ENCODE measurements at regions of chrX and their contacts with region 1.

Region 1: DNA sequence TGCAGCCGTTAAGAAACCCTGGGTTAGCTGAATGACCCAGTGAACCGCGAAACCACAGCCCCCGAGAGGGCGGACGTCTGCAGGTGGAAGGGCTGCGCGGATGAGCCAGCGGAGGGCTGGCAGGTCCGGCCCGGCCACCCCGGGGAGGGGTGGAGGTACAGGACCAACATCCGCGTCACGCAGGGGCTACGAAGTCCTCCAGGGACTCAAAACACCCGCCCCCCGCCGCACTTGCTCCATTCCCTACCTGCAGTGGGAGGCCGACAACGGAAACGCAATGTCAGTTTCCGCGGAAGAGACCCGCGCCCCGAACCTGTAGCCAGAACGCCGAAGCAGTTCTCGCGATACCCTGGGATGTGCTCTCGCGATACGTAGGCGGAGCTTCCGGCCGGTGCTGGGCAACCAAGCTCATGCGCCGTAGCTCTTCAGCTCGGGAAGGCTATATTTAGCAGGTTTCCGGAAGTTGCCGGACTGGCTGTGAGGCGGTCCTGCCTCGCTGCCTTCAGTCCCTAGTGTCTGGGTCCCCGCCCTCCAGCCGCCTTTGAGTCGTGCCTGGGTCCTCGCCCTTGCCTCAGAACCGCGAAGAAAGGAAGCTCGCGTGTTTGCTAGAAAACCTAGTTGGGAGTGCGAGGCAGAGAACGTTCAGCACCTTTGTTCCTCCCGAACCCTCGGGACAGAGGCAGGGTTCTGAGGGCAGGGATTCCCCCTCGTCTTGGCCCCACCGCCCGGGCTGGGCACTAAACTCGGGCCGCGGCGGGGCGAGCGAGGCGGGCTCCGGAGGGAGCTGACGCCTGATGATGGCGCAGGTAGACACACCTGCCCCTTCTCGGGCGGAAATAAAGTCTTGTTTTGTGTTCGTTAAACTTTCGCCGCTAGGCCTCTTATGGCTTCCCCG is at the starts of genes OFD1 and TRAPPC2:
- DNase-seq: peak; percentile 98

Region 2: DNA sequence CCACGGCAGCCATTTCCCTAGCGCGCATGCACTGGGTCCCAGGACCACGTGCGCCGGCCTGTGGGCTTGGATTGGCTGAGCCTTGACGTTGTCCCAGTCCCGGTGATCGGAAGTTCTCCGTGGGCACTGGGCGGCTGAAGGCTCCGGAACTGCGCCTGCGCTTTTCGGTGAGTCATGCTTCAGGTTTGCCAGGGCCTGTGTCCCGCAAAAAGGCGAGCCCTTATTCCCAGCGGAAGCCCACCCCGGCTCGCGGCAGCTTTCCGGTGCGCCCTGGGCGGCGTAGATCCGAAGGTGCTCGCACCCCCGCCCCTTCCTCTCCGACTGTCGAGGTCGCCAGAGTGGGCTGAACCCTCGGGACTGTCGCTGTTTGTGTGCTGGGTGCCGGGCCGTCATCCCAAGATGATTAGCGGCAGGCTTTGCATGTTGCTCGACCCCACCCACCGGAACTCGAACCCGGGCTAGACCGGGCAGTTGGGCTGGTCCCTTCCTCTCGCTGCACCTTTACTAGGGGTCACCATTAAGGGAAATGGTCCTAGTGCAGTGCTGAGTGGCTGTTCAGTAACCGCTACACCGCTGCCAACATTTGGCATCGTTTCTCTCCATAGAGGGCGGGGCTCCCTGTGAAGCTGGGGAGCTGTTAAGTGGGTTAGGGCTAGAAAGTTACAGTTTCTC is 81.4 kb before region 1 on chrX and contains the start of gene TCEANC:
- CTCF ChIA-PET with region 1: no interaction called
- POLR2A ChIA-PET with region 1: interaction called, 11 read pairs
- DNase-seq: peak; percentile 94

Region 3: DNA sequence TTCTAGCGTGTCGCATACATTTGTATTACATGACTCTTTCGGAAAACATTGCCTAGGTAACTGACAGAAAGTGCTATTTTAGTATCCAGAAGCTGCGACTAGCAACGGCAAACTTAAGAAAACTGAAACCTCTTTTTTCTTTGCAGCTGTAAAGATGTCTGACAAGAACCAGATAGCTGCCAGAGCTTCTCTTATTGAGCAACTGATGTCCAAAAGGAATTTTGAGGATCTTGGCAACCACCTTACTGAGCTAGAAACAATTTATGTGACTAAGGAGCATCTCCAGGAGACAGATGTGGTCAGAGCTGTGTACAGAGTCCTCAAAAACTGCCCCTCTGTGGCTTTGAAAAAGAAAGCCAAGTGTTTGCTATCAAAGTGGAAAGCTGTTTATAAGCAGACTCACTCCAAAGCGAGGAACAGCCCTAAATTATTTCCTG is 72.2 kb before region 1 on chrX:
- CTCF ChIA-PET with region 1: no interaction called
- POLR2A ChIA-PET with region 1: interaction called, 17 read pairs
- DNase-seq: no peak

Region 4: GRCh38 chrX:13688958-13689740 is 45.4 kb before region 1 on chrX and contains the start of gene RAB9A:
- CTCF ChIA-PET with region 1: no interaction called
- POLR2A ChIA-PET with region 1: interaction called, 26 read pairs
- DNase-seq: peak; percentile 92

Region 5: GRCh38 chrX:13721819-13722519 is 12.6 kb before region 1 on chrX:
- CTCF ChIA-PET with region 1: no interaction called
- POLR2A ChIA-PET with region 1: interaction called, 32 read pairs
- DNase-seq: no peak

Region 6: GRCh38 chrX:13750204-13750603 is 15.7 kb after region 1 on chrX:
- CTCF ChIA-PET with region 1: interaction called, 5 read pairs
- POLR2A ChIA-PET with region 1: interaction called, 10 read pairs
- DNase-seq: peak; percentile 40

Region 7: GRCh38 chrX:13837290-13837745 is 102.8 kb after region 1 on chrX:
- CTCF ChIA-PET with region 1: no interaction called
- POLR2A ChIA-PET with region 1: no interaction called
- DNase-seq: peak; percentile 23

Region 8: DNA sequence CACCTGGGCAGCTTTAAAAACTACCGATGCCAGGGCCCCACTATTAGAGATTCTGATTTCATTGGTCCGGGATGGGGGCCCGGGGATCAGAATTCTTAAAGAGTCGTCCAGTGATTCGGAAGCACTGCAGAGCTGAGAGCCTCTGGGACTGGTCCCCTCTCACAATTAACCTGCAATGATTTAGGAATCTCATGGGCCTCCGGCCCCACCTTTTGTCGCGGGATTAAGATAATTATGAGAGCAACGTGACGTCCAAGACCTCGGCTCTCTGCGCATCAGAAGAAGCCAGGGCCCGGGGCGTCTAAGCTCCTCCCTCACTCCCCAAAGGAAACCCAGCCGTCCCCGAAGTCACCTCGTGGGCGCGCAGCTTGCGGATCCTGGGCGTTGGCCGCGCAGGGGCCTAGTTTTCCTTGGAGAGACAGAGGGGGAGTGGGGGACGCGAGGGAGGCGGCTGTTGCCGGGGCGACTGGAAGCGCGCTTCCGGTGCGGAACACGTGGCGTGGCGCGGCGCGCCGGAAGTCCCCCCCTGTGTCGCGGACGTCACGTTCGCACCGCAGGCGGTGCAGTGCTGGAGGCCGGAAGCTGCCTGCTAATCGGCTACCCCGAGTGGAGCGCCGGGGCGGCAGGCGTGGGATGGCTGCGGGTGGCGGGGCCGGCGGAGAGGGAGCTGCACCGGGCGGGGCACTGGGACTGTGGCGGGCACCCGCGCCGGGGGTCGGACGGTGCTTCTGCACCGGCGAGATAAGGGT is 295.1 kb after region 1 on chrX and contains the start of gene GEMIN8:
- CTCF ChIA-PET with region 1: no interaction called
- POLR2A ChIA-PET with region 1: interaction called, 10 read pairs
- DNase-seq: peak; percentile 75

Measured in HEK293T (cell line).